CD4-positive, alpha-beta T cell (primary cell): ENCODE measurements at regions of chr20 and their contacts with region 1.

Region 1: DNA sequence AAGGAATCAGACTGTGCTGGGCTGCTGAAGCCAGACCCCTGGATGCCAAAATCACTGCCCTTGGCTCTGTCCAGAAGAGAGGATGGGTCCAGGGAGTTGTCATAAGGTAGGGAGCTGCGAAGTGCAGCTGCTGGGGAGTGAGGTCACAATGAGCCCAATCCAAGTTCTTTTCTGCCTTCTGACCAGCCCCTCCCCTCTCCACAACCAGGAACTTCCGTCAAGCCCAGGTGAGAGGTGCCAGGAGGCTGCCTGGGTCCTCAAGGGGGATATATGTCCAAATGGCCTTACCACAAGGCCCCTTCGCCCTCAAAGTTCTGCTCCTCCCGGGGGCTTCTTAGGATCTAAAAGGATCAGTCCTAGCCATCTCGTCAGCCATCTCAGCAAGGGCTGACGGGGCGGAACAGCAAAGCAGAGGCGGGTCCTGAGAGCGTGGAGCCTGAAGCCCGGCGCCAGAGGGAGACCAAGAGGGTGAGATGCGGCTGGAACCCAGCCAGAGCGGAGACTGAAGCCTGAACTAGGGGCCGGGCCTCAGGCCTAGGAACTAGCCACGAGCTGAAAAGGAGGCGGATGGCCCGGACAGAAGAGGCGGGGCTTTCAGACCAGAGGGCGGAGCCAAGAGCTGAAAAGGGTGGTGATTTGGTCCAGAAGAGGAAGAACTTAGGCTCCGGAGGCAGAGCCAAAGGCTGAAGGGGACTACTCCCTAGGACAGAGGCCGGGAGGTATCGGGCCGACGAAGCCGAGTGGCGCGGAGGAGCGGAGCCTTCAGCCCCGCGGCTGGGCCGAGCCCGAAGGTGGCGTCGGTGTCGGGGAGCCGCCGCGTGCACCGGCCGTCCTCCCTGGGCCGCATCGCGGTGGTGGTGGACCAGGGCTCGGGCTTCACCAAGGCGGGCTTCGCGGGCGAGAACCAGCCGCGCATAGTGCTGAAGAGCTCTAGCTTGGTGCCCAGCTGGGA is at the start of gene ACTL10:
- DNase-seq: peak; percentile 54 to 92 (median 69)
- ATAC-seq: peak; percentile 46
- H3K4me3 ChIP-seq: peak within 1 kb of the TSS; percentile 72
- H3K4me3 Mint-ChIP-seq: peak within 1 kb of the TSS; percentile 93
- H3K27ac ChIP-seq: peak within 1 kb of the TSS; percentile 63 to 69
- H3K27ac Mint-ChIP-seq: peak within 1 kb of the TSS; percentile 92
- H3K4me1 ChIP-seq: peaks cover 52% of the 10 kb centered on the region
- H3K4me1 Mint-ChIP-seq: peaks cover 35% of the 10 kb centered on the region
- H3K27me3 ChIP-seq: no peaks in the 10 kb centered on the region
- H3K27me3 Mint-ChIP-seq: no peaks in the 10 kb centered on the region
- CTCF ChIP-seq: no peak
- total RNA-seq, gene ACTL10: 0.28 to 0.55 TPM

Region 2: GRCh38 chr20:33443512-33444239 is 222.9 kb before region 1 on chr20 and contains the start of gene SNTA1:
- CTCF ChIA-PET with region 1: interaction called, 15 read pairs
- POLR2A ChIA-PET with region 1: interaction called, 19 read pairs
- intact Hi-C with region 1: loop called in 1 of 2 experiments (anchors 5 kb)
- DNase-seq: peak; percentile 74 to 95 (median 86)
- ATAC-seq: peak; percentile 57
- H3K4me3 ChIP-seq: peak within 1 kb of the TSS; percentile 90
- H3K4me3 Mint-ChIP-seq: peak within 1 kb of the TSS; percentile 95
- H3K27ac ChIP-seq: peak within 1 kb of the TSS; percentile 72 to 80
- H3K27ac Mint-ChIP-seq: peak within 1 kb of the TSS; percentile 94
- H3K4me1 ChIP-seq: peaks cover 25% of the 10 kb centered on the region
- H3K4me1 Mint-ChIP-seq: peaks cover 22% of the 10 kb centered on the region
- H3K27me3 ChIP-seq: no peaks in the 10 kb centered on the region
- H3K27me3 Mint-ChIP-seq: no peaks in the 10 kb centered on the region
- CTCF ChIP-seq: no peak
- total RNA-seq, gene SNTA1: 5.0 to 5.2 TPM

Region 3: GRCh38 chr20:33489495-33490022 is 177.0 kb before region 1 on chr20:
- CTCF ChIA-PET with region 1: interaction called, 6 read pairs
- POLR2A ChIA-PET with region 1: interaction called, 29 read pairs
- intact Hi-C with region 1: no loop called
- DNase-seq: peak; percentile 97 to 100 (median 99)
- ATAC-seq: peak; percentile 96
- H3K4me3 ChIP-seq: peak overlapping the region; percentile 57
- H3K4me3 Mint-ChIP-seq: peak overlapping the region; percentile 94
- H3K27ac ChIP-seq: peak overlapping the region; percentile 92 to 95
- H3K27ac Mint-ChIP-seq: peak overlapping the region; percentile 96
- H3K4me1 ChIP-seq: peaks cover 26% of the 10 kb centered on the region
- H3K4me1 Mint-ChIP-seq: peaks cover 36% of the 10 kb centered on the region
- H3K27me3 ChIP-seq: no peaks in the 10 kb centered on the region
- H3K27me3 Mint-ChIP-seq: no peaks in the 10 kb centered on the region
- CTCF ChIP-seq: no peak

Region 4: GRCh38 chr20:33653218-33653899 is 13.2 kb before region 1 on chr20:
- CTCF ChIA-PET with region 1: interaction called, 12 read pairs
- POLR2A ChIA-PET with region 1: interaction called, 4 read pairs
- intact Hi-C with region 1: no loop called
- DNase-seq: peak in 9 of 14 experiments; percentile 24 to 61 (median 35)
- ATAC-seq: peak; percentile 41
- H3K4me3 ChIP-seq: no peak overlapping the region
- H3K4me3 Mint-ChIP-seq: no peak overlapping the region
- H3K27ac ChIP-seq: no peak overlapping the region
- H3K27ac Mint-ChIP-seq: no peak overlapping the region
- H3K4me1 ChIP-seq: no peaks in the 10 kb centered on the region
- H3K4me1 Mint-ChIP-seq: no peaks in the 10 kb centered on the region
- H3K27me3 ChIP-seq: no peaks in the 10 kb centered on the region
- H3K27me3 Mint-ChIP-seq: no peaks in the 10 kb centered on the region
- CTCF ChIP-seq: peak; percentile 58

Region 5: DNA sequence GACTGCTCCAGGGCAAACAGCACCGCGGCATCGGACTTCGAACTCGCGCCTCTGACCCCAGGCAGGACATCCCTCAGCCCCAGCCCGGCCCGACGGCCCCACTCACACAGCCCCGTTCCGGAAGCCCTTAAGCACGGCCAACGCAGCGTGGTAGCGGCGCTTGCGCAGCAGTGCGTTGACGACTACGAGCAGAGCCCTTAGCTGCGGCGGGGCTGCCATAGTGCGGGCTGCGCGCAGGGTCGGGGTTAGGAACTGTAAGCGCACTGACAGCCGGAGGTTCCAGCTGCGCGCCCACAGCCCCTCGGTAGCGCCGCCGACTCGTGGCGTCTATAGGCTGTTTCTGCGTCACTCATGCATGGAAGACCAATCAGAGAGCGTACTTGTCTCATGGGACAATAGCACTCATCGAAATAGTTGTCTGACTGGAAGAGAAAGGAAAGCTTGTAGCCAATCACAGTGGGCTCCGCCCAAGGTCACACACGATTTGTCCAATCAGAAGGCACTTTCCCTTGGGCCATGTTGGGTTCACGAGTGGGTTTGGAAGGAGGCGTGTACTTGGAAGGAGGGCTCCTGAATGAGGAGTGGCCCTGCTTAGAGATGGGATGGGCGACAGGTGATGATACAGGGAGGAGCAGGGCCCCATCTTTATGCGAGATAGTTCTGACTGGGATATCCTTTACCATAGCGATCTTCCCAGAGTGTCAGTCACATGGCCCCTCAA is 53.6 kb after region 1 on chr20 and contains the start of gene PXMP4:
- CTCF ChIA-PET with region 1: interaction called, 14 read pairs
- POLR2A ChIA-PET with region 1: interaction called, 23 read pairs
- intact Hi-C with region 1: no loop called
- DNase-seq: peak; percentile 68 to 97 (median 82)
- ATAC-seq: peak; percentile 94
- H3K4me3 ChIP-seq: peak within 1 kb of the TSS; percentile 66
- H3K4me3 Mint-ChIP-seq: peak within 1 kb of the TSS; percentile 83
- H3K27ac ChIP-seq: peak within 1 kb of the TSS; percentile 2 to 72
- H3K27ac Mint-ChIP-seq: peak within 1 kb of the TSS; percentile 60
- H3K4me1 ChIP-seq: peaks cover 20% of the 10 kb centered on the region
- H3K4me1 Mint-ChIP-seq: peaks cover 18% of the 10 kb centered on the region
- H3K27me3 ChIP-seq: no peaks in the 10 kb centered on the region
- H3K27me3 Mint-ChIP-seq: no peaks in the 10 kb centered on the region
- CTCF ChIP-seq: peak; percentile 13
- total RNA-seq, gene PXMP4: 3.6 to 4.1 TPM

Region 6: DNA sequence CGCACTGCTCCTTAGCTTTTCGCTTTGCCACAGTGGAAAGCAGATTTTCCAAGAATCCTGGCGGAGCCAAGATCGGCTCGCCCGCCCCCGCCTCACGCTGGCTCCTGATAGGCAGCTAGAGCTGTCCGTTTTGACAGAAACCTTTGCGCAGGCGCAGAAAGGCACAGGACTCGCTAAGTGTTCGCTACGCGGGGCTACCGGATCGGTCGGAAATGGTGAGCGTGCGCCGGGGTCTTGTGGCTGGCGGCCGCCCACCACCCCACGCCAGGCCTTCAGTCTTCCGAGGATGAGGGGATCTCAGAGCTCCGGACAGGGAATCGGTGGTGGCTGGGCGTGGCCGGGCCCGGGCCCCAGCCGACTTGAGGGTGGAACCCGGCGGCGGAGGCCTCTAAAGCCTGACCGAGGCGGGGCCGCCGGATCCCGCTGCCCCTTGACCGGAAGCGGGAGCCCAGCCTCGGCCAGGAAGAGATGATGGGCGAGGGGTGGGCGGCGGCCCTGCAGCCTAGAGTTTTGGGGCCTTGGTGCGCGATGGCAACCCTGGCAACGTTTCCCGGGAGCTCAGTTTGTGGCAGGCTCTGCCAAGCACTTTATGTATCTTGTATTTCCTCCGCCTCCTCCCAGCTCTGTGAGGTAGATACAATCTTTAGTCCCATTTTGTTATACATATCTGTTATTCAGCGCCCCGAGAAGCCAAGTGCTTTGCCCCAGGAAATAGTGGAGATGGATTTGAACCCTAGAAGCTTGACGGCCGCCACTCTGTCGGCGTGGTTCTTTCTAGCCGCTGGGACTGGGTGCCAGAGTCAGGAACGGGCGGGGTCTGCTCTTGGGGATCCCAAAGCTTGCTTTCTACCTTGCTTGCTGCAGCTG is 849.9 kb after region 1 on chr20 and contains the start of gene DYNLRB1:
- CTCF ChIA-PET with region 1: no interaction called
- POLR2A ChIA-PET with region 1: no interaction called
- intact Hi-C with region 1: loop called in 1 of 2 experiments (anchors 5 kb)
- DNase-seq: peak; percentile 88 to 96 (median 94)
- ATAC-seq: peak; percentile 74
- H3K4me3 ChIP-seq: peak within 1 kb of the TSS; percentile 82
- H3K4me3 Mint-ChIP-seq: peak within 1 kb of the TSS; percentile 99
- H3K27ac ChIP-seq: peak within 1 kb of the TSS; percentile 60 to 80
- H3K27ac Mint-ChIP-seq: peak within 1 kb of the TSS; percentile 94
- H3K4me1 ChIP-seq: peaks cover 30% of the 10 kb centered on the region
- H3K4me1 Mint-ChIP-seq: peaks cover 70% of the 10 kb centered on the region
- H3K27me3 ChIP-seq: no peaks in the 10 kb centered on the region
- H3K27me3 Mint-ChIP-seq: no peaks in the 10 kb centered on the region
- CTCF ChIP-seq: no peak
- total RNA-seq, gene DYNLRB1: 38.3 to 40.3 TPM